PC-3 (cell line): ENCODE measurements at regions of chr13 and their contacts with region 1.

Region 1: GRCh38 chr13:27826379-27827353 is 34.4 kb downstream of the GSX1 start:
- DNase-seq: peak; percentile 85
- ATAC-seq: peak; percentile 86
- H3K4me3 ChIP-seq: peak overlapping the region; percentile 67
- H3K27ac ChIP-seq: no peak overlapping the region
- H3K4me1 ChIP-seq: peaks cover 8% of the 10 kb centered on the region
- H3K27me3 ChIP-seq: peaks cover 37% of the 10 kb centered on the region
- CTCF ChIP-seq: peak; percentile 91

Region 2: GRCh38 chr13:26946684-26947343 is 879.9 kb before region 1 on chr13:
- CTCF ChIA-PET with region 1: interaction called, 5 read pairs
- POLR2A ChIA-PET with region 1: no interaction called
- intact Hi-C with region 1: loop called (anchors 10 kb)
- DNase-seq: peak; percentile 70
- ATAC-seq: peak; percentile 96
- H3K4me3 ChIP-seq: no peak overlapping the region
- H3K27ac ChIP-seq: no peak overlapping the region
- H3K4me1 ChIP-seq: peaks cover 4% of the 10 kb centered on the region; the same call in 1 of the 2 replicates
- H3K27me3 ChIP-seq: no peaks in the 10 kb centered on the region
- CTCF ChIP-seq: peak; percentile 81

Region 3: DNA sequence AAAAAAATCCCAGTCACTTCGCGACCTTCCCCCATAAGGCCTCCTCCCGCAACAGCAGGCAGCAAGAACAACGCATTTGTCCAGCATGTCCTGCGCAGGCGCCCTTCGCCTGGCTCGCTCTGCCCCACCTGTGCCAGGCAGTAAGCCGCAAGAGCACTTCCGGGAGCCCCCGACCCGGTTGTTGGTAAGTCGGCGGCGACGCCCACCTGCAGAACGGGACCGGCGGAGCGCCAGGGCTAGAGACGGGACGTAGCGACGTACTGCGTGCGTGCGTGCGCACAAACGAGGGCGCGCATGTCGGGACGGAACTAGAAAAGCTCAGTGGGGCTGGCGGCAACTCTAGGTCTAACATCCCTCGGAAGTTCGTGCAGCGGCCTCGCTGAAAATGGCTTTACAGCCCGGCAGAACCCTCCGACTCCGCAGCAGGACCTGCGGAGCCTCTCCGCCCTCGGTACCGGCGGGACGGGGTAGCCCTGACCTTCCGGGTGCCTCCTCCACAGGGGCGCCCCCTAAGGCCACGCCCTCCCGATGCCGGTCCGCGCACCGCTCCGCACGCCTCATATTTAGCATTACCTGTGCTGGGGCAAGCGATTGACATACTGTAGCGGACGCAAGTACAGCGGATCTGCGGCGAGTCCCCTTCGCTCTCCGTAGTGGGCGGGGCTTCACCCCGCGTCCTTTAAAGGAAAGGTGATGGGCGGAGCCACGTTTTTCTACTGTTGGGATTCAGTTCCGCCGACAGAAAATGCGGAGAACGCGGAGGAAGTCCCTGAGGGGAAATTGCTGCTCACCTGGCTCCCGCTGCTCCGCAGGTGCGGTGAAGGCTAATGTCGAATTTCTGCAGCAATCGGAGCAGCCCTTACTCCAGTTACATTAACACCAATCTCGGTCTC is 376.5 kb before region 1 on chr13 and contains the start of gene MTIF3:
- CTCF ChIA-PET with region 1: no interaction called
- POLR2A ChIA-PET with region 1: no interaction called
- intact Hi-C with region 1: loop called (anchors 1 kb)
- DNase-seq: peak; percentile 96
- ATAC-seq: peak; percentile 85
- H3K4me3 ChIP-seq: peak within 1 kb of the TSS; percentile 93
- H3K27ac ChIP-seq: peak within 1 kb of the TSS; percentile 98
- H3K4me1 ChIP-seq: peaks cover 16% of the 10 kb centered on the region
- H3K27me3 ChIP-seq: no peaks in the 10 kb centered on the region
- CTCF ChIP-seq: no peak
- total RNA-seq, gene MTIF3: 28.2 and 43.9 TPM in 2 replicates

Region 4: DNA sequence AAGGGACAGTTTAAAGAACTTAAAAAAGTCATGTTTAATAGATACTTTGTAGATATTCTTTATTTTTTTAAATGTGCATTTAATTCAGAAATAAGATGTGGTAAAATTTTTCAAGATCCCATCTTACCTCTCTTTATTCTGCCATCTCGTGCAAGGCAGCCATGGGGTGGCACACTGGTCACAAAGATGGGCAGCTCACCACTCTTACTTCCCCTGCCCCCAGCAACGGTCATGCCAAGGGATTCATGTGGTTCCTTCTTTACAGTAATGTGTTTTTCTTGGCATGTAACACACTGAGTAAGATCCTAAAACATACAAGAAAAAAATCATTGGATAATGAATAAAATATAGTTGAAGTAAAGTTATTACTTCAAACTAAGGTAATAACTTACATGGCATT is 270.6 kb before region 1 on chr13:
- CTCF ChIA-PET with region 1: interaction called, 3 read pairs
- POLR2A ChIA-PET with region 1: no interaction called
- intact Hi-C with region 1: loop called (anchors 1 kb)
- DNase-seq: peak; percentile 23
- ATAC-seq: peak; percentile 74
- H3K4me3 ChIP-seq: no peak overlapping the region
- H3K27ac ChIP-seq: no peak overlapping the region
- H3K4me1 ChIP-seq: no peaks in the 10 kb centered on the region
- H3K27me3 ChIP-seq: no peaks in the 10 kb centered on the region
- CTCF ChIP-seq: peak; percentile 45; the same call in 1 of the 2 replicates

Region 5: DNA sequence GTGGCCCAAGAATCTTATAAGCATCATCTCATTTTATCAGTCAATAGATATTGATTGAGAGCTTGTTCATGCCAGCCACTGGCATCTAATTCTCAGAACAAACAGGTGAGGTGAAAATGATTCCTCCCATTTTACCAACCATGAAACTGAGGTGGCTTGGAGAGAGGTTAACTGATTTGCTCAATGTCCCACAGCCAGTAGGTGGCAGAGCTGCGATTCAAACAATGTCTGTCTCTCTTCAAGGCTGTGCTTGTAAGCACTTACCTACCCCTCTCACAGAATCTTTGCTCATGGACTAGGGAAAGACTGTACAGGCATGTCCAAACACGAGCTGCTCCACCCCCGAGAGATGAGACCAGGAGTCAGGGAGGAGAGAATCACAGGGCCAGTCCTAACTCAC is 55.9 kb before region 1 on chr13:
- CTCF ChIA-PET with region 1: interaction called, 5 read pairs
- POLR2A ChIA-PET with region 1: no interaction called
- intact Hi-C with region 1: loop called (anchors 1 kb)
- DNase-seq: peak; percentile 56
- ATAC-seq: peak; percentile 84
- H3K4me3 ChIP-seq: no peak overlapping the region
- H3K27ac ChIP-seq: no peak overlapping the region
- H3K4me1 ChIP-seq: peaks cover 6% of the 10 kb centered on the region
- H3K27me3 ChIP-seq: 0 out of 2 replicates have a peak, but pooled peaks cover 9% of the 10 kb centered on the region
- CTCF ChIP-seq: peak; percentile 72

Region 6: GRCh38 chr13:27980280-27980998 is 153.8 kb after region 1 on chr13:
- CTCF ChIA-PET with region 1: interaction called, 12 read pairs
- POLR2A ChIA-PET with region 1: no interaction called
- intact Hi-C with region 1: loop called (anchors 1 kb)
- DNase-seq: no peak
- ATAC-seq: no peak
- H3K4me3 ChIP-seq: no peak overlapping the region
- H3K27ac ChIP-seq: no peak overlapping the region
- H3K4me1 ChIP-seq: no peaks in the 10 kb centered on the region
- H3K27me3 ChIP-seq: peaks cover 30% of the 10 kb centered on the region
- CTCF ChIP-seq: no peak

Region 7: GRCh38 chr13:28258417-28258816 is 431.8 kb after region 1 on chr13:
- CTCF ChIA-PET with region 1: no interaction called
- POLR2A ChIA-PET with region 1: no interaction called
- intact Hi-C with region 1: no loop called
- DNase-seq: no peak
- ATAC-seq: no peak
- H3K4me3 ChIP-seq: no peak overlapping the region
- H3K27ac ChIP-seq: no peak overlapping the region
- H3K4me1 ChIP-seq: no peaks in the 10 kb centered on the region
- H3K27me3 ChIP-seq: no peaks in the 10 kb centered on the region
- CTCF ChIP-seq: no peak